Tibial artery (tissue), 4 donors: ENCODE measurements at regions of chr3 and their contacts with region 1.

Region 1: DNA sequence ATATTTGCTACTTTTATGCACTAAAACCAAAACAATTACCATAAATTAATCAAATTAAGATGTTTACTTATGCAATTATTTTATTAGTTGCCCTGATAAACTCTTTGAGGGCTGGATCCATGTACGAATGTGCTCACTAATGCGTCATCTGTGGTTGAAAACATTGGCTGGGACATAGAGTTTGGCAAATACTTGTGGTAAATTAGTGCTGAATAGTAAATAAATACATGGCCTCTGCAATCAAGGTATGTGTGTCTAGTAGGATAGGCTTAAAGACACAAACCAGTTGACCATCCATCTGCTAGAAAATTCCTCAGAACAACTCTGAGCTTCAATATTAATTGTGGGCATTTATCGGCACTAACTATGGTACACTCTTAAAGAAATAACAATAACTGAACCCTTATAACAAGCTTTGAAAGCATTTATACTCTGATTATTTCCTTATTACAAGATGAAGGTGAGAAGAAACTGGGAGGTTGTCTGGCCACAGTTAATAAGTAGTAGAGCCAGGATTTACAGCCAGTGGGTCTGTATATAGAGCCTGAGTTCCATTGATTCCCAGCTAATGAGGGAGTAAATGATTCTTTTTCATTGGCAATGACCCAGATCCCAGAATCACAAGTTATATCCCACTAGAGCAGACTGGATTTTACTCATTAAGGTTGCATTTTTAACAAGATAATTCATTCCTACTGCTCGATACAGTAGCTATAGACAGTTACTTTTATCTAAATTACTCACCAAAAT is 169.5 kb upstream of the CNTN6 start:
- DNase-seq: no peak
- H3K4me3 ChIP-seq: no peak overlapping the region
- H3K27ac ChIP-seq: no peak overlapping the region
- H3K4me1 ChIP-seq: no peaks in the 10 kb centered on the region
- H3K27me3 ChIP-seq: no peaks in the 10 kb centered on the region
- CTCF ChIP-seq: no peak

Region 2: GRCh38 chr3:713006-713624 is 210.2 kb before region 1 on chr3:
- intact Hi-C with region 1: no loop called
- DNase-seq: no peak
- H3K4me3 ChIP-seq: no peak overlapping the region
- H3K27ac ChIP-seq: no peak overlapping the region
- H3K4me1 ChIP-seq: no peaks in the 10 kb centered on the region
- H3K27me3 ChIP-seq: no peaks in the 10 kb centered on the region
- CTCF ChIP-seq: no peak

Region 3: GRCh38 chr3:1632128-1632527 is 708.8 kb after region 1 on chr3:
- intact Hi-C with region 1: loop called (anchors 5 kb)
- DNase-seq: no peak
- H3K4me3 ChIP-seq: no peak overlapping the region
- H3K27ac ChIP-seq: no peak overlapping the region
- H3K4me1 ChIP-seq: no peaks in the 10 kb centered on the region
- H3K27me3 ChIP-seq: no peaks in the 10 kb centered on the region
- CTCF ChIP-seq: no peak